ENCODE measurements at regions of chr22 and their contacts with region 1.

Region 1: DNA sequence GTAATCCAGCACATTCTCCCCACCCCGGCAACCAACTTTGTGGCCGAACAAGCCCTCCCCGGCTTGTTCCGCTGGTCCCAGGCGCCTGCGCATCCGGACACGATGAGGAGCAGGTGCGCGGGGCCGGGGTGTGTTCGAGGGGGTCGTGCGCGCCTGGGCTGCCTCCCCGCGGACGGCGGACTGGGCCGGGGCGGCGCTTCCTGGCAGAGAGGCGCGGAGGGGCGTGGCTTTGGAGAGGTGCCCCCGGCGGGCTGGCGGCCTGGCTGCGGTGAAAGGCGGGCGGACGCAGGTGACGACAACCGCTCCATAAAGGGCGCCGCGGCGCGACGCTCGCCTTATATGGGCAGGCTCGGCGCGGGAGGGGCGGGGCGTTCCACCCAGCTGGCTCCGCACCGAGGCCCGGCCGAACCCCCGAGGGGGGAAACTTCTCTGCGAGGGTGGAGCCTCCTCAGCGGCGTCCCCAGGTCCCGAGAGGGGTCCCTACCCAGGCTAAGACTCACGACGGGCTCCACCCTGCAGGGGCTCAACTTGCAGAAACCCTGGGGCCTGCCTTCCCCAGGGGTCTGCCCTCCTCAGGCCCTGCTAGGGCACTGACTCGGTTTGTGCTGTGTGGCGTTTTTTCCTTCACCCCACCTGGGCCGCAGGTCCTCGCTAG is 26.4 kb downstream of the TXN2 start:
- DNase-seq: peak; percentile 96
- H3K4me3 ChIP-seq: peak overlapping the region; percentile 63
- H3K27ac ChIP-seq: peak overlapping the region; percentile 68
- H3K4me1 ChIP-seq: peaks cover 46% of the 10 kb centered on the region
- CTCF ChIP-seq: peak; percentile 44

Region 2: DNA sequence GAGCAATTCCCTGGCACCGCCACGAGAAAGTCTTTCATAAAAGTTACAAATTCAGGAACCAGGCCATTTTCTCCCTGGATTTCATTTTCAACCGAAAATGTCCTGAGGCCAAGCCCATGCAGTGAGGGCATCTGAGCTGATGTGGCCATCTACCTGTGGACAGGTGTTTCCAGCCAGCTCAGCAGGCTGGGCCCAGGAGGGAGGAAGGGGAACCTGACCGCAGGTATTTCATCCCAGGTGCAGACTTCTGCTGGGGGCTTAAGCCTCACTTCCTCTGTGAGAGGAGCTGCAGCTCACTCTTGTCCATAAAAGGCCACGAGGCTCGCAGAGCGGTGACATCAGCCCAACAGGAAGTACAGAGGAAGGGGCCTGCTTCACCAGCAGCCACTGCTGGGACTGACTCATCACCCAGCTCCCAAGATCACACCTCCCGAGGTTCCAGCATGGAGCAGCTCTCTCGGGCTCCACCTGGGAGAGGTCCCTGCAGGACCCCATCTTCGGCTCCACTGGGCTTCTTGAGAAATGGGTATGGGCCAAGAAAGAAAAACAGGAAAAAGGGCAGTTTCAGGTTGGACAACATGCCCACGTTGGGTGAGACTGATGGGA is 123.6 kb before region 1 on chr22:
- CTCF ChIA-PET with region 1: no interaction called
- POLR2A ChIA-PET with region 1: interaction called, 5 read pairs
- intact Hi-C with region 1: loop called (anchors 1 kb)
- DNase-seq: peak; percentile 91
- H3K4me3 ChIP-seq: peak overlapping the region; percentile 60
- H3K27ac ChIP-seq: peak overlapping the region; percentile 89
- H3K4me1 ChIP-seq: peaks cover 66% of the 10 kb centered on the region
- CTCF ChIP-seq: no peak

Region 3: DNA sequence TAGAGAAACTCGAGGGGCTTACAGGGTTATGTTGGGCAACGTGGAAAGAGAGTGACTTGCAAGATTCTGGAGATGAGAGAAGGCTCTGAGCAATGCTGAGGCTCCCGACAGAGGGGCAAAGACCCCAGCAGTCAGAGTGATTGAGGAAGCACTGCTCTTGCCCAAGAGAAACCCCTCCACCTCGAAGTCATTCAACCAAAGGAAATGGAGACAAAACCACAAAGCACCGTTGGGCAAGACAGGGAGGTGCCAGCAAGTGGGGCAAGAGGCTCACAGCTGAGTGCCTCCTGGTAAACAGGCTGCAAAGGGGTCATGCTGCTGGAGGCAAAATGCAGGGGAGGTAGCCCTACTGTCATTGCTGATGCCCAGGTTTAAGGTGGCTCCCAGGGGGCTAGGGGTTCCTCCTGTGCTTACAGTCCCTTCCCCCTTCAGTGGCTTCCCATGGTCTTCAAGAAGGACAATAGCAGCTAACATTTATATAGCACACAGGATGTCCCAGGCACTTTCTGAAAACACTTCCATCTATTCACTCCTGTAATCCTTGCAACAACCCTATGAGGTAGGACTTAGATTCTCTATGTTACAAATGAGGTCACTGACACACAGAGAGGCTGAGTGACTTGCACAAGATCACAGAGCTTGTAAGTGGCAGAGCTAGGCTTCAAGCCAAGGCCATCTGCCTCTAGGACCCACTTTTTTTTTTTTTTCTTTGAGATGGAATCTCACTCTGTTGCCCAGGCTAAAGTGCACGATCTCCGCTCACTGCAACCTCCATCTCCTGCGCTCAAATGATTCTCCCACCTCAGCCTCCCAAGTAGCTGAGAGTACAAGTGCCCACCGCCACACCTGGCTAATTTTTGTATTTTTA is 49.1 kb before region 1 on chr22:
- CTCF ChIA-PET with region 1: no interaction called
- POLR2A ChIA-PET with region 1: interaction called, 3 read pairs
- intact Hi-C with region 1: loop called (anchors 2 kb)
- DNase-seq: peak; percentile 88
- H3K4me3 ChIP-seq: peak overlapping the region; percentile 18
- H3K27ac ChIP-seq: peak overlapping the region; percentile 92
- H3K4me1 ChIP-seq: peaks cover 50% of the 10 kb centered on the region
- CTCF ChIP-seq: peak; percentile 41; the same call in 1 of the 2 replicates

Region 4: DNA sequence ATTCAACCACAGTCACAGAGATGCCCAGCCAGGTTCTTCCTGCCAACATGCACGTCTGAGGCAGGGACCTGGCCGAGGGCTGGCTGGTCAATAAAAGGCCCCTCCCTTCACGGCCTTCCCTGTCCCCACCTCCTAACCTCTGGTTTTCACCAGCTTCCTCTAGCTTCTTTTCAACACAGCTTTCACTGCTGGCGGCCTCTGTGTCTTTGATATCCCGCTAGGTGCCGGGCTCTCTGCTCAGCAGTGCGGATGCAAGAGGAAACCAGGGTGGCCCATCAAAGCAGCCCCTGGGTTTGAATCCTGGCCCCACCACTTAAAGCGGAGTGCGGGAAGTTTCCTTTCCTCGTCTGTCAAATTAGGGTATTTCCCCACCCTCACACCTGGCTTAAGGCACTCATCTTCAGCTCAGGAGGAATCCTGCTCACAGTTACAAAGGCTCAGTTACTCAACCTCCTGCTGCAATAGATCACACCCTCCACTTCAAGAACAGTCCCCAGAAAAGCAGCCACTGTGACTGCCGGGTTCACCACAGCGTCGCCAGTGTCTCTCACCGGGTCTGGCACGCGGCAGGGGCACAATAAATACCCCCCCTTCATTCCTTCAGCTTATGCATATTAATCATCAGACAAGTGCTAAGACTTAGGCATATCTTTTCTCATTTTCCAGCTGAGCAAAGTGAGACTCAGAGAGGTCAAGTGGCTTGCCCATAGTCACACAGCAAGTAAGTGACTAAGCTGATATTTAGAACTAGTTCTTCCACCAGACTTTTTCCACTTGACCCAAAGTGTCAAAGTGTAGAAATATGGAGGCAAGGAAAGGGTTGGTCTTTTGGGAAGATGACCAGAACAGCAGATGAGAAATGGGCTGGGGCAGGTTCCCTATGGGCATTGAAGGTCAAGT is 19.3 kb before region 1 on chr22:
- CTCF ChIA-PET with region 1: no interaction called
- POLR2A ChIA-PET with region 1: no interaction called
- intact Hi-C with region 1: no loop called
- DNase-seq: no peak
- H3K4me3 ChIP-seq: no peak overlapping the region
- H3K27ac ChIP-seq: no peak overlapping the region
- H3K4me1 ChIP-seq: peaks cover 7% of the 10 kb centered on the region
- CTCF ChIP-seq: no peak

Measured in OCI-LY7 (cell line).